CD4-positive, alpha-beta memory T cell (primary cell): ENCODE measurements at regions of chr6 and their contacts with region 1.

Region 1: GRCh38 chr6:142952614-142953013 is 7.6 kb upstream of the HIVEP2 start:
- DNase-seq: no peak
- H3K4me3 ChIP-seq: no peak overlapping the region
- H3K4me3 Mint-ChIP-seq: no peak overlapping the region
- H3K27ac ChIP-seq: no peak overlapping the region
- H3K27ac Mint-ChIP-seq: peak overlapping the region; percentile 3 to 86 (median 57)
- H3K4me1 ChIP-seq: peaks cover 6% of the 10 kb centered on the region
- H3K4me1 Mint-ChIP-seq: peaks cover 13 to 20% (median 16%) of the 10 kb centered on the region in 4 donors
- H3K27me3 ChIP-seq: no peaks in the 10 kb centered on the region
- H3K27me3 Mint-ChIP-seq: no peaks in the 10 kb centered on the region

Region 2: DNA sequence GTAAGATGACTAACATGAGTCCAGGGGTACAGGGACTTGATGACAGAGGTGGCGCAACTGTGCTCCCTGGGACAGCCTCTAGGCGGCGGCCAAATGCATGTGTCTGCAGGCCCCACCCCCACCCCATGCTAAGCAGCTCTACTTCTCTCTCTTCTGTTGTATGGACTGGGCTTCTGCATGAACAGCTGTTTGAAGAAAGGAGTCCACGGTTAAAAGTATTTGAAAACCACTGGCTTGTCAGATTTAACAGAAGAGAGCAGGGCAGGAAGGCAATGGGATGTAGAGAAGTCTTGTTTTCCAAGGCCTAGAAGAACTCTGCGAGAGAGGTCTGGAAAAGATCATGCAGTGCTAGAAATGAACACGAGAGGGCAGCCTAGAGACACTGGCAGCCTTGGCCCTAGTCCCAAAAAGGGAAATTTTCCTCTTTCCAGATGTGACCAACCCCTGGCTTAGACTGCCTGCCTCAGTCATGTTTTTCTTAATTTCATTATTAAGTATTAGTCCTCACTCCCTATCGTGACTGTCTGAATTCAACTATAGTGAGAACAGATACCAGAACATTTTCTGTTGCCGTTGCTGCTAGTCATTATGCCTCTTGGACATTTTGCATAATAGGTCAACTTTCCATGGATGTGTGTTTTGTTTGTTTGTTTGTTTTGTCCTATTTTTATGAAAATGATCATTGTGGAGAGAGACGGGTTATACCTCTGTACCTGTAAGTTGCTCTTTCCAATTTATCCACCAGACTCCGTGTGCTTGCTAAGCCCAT is 385.8 kb before region 1 on chr6:
- CTCF ChIA-PET with region 1: interaction called, 4 read pairs
- POLR2A ChIA-PET with region 1: no interaction called
- intact Hi-C with region 1: loop called (anchors 1 kb)
- DNase-seq: peak; percentile 47 to 49 (median 48)
- H3K4me3 ChIP-seq: no peak overlapping the region
- H3K4me3 Mint-ChIP-seq: peak overlapping the region in 2 of 8 donors; percentile 29 to 53
- H3K27ac ChIP-seq: no peak overlapping the region
- H3K27ac Mint-ChIP-seq: peak overlapping the region in 6 of 7 donors; percentile 24 to 64 (median 40)
- H3K4me1 ChIP-seq: peaks cover 52% of the 10 kb centered on the region
- H3K4me1 Mint-ChIP-seq: peaks cover 34 to 59% (median 51%) of the 10 kb centered on the region in 4 donors
- H3K27me3 ChIP-seq: no peaks in the 10 kb centered on the region
- H3K27me3 Mint-ChIP-seq: no peaks in the 10 kb centered on the region

Region 3: DNA sequence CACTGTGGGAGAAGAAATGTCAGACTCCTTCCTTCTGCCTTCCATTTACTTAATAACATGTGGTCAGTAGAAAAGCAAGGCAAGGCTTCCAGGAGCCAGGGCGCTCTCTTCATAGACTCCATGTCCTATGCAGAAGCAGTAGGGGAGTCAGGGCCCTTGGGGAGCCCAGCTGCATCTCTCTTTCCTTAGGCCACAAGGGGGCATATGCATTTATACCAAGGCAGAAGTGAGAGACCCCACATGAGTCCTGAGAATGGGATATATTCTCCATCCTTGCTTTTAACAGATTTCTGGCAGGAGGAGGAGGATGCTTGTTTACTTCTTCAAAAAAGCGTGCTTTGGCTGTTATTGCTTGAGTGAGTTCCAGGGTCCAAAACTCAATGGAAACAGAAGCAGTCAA is 206.1 kb before region 1 on chr6:
- CTCF ChIA-PET with region 1: interaction called, 26 read pairs
- POLR2A ChIA-PET with region 1: no interaction called
- intact Hi-C with region 1: loop called (anchors 1 kb)
- DNase-seq: peak in 4 of 5 donors; percentile 29 to 42 (median 34)
- H3K4me3 ChIP-seq: no peak overlapping the region
- H3K4me3 Mint-ChIP-seq: no peak overlapping the region
- H3K27ac ChIP-seq: no peak overlapping the region
- H3K27ac Mint-ChIP-seq: peak overlapping the region in 1 of 7 donors; percentile 16
- H3K4me1 ChIP-seq: peaks cover 5% of the 10 kb centered on the region
- H3K4me1 Mint-ChIP-seq: peaks cover 3 to 11% (median 9%) of the 10 kb centered on the region in 4 donors
- H3K27me3 ChIP-seq: no peaks in the 10 kb centered on the region
- H3K27me3 Mint-ChIP-seq: no peaks in the 10 kb centered on the region